ENCODE measurements at regions of chr4 and their contacts with region 1.

Region 1: GRCh38 chr4:15231265-15232091 is 196.4 kb upstream of the C1QTNF7 start:
- DNase-seq: peak; percentile 64
- ATAC-seq: peak; percentile 97
- H3K4me3 ChIP-seq: no peak overlapping the region
- H3K27ac ChIP-seq: no peak overlapping the region
- H3K4me1 ChIP-seq: peaks cover 0 to 5% of the 10 kb centered on the region in 2 experiments; a peak in 1 of 4 replicates
- H3K27me3 ChIP-seq: no peaks in the 10 kb centered on the region
- CTCF ChIP-seq: peak; percentile 76 to 83 (median 80)
- POLR2A ChIP-seq: no peak
- RAD21 ChIP-seq: peak; percentile 69

Region 2: DNA sequence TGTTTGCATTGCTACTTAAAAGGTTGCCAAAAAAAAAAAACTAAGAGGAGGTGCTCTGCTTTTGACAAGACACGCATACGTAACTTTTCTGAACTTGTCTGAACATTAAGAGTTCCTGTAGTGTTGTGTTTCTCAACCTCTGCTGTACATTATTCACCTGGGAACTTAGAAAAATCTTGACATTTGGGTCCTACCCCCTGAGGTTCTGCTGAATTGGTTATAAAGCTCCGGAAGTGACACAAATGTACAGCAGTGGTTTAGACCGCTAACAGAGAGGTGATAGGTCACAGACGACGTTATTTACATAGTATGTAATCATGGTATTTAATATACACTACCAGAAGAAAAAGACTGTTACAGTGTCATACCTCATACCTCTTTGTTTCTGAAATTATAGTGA is 168.1 kb before region 1 on chr4:
- CTCF ChIA-PET with region 1: no interaction called
- POLR2A ChIA-PET with region 1: no interaction called
- RAD21 ChIA-PET with region 1: no interaction called
- intact Hi-C with region 1: no loop called
- DNase-seq: no peak
- ATAC-seq: no peak
- H3K4me3 ChIP-seq: no peak overlapping the region
- H3K27ac ChIP-seq: no peak overlapping the region
- H3K4me1 ChIP-seq: no peaks in the 10 kb centered on the region
- H3K27me3 ChIP-seq: no peaks in the 10 kb centered on the region
- CTCF ChIP-seq: no peak
- POLR2A ChIP-seq: no peak
- RAD21 ChIP-seq: no peak

Region 3: GRCh38 chr4:15396157-15396800 is 164.8 kb after region 1 on chr4:
- CTCF ChIA-PET with region 1: interaction called, 4 read pairs
- POLR2A ChIA-PET with region 1: no interaction called
- RAD21 ChIA-PET with region 1: no interaction called
- intact Hi-C with region 1: loop called (anchors 2 kb)
- DNase-seq: peak; percentile 34
- ATAC-seq: peak; percentile 95
- H3K4me3 ChIP-seq: no peak overlapping the region
- H3K27ac ChIP-seq: no peak overlapping the region
- H3K4me1 ChIP-seq: peaks cover 0 to 9% of the 10 kb centered on the region in 2 experiments; a peak in 3 of 4 replicates
- H3K27me3 ChIP-seq: no peaks in the 10 kb centered on the region
- CTCF ChIP-seq: peak; percentile 47 to 84 (median 76); a peak in 5 of 6 replicates
- POLR2A ChIP-seq: no peak
- RAD21 ChIP-seq: peak; percentile 67

Region 4: GRCh38 chr4:15457406-15458201 is 226.1 kb after region 1 on chr4:
- CTCF ChIA-PET with region 1: interaction called, 4 read pairs
- POLR2A ChIA-PET with region 1: no interaction called
- RAD21 ChIA-PET with region 1: interaction called in 1 of 2 experiments, 3 read pairs
- intact Hi-C with region 1: loop called (anchors 1 kb)
- DNase-seq: no peak
- ATAC-seq: peak; percentile 88
- H3K4me3 ChIP-seq: no peak overlapping the region
- H3K27ac ChIP-seq: no peak overlapping the region
- H3K4me1 ChIP-seq: peaks cover 0 to under 1% of the 10 kb centered on the region in 2 experiments; a peak in 1 of 4 replicates
- H3K27me3 ChIP-seq: peaks cover 17% of the 10 kb centered on the region; the same call in 1 of the 2 replicates
- CTCF ChIP-seq: peak; percentile 45 to 78 (median 67); a peak in 5 of 6 replicates
- POLR2A ChIP-seq: no peak
- RAD21 ChIP-seq: peak; percentile 68

Region 5: GRCh38 chr4:15649914-15650545 is 418.6 kb after region 1 on chr4:
- CTCF ChIA-PET with region 1: no interaction called
- POLR2A ChIA-PET with region 1: no interaction called
- RAD21 ChIA-PET with region 1: no interaction called
- intact Hi-C with region 1: loop called (anchors 2 kb)
- DNase-seq: peak; percentile 45
- ATAC-seq: peak; percentile 66
- H3K4me3 ChIP-seq: no peak overlapping the region
- H3K27ac ChIP-seq: no peak overlapping the region
- H3K4me1 ChIP-seq: peaks cover 8 to 18% of the 10 kb centered on the region in 2 experiments
- H3K27me3 ChIP-seq: no peaks in the 10 kb centered on the region
- CTCF ChIP-seq: peak; percentile 63 to 89 (median 77); a peak in 5 of 6 replicates
- POLR2A ChIP-seq: no peak
- RAD21 ChIP-seq: peak; percentile 80

Region 6: GRCh38 chr4:16006791-16007446 is 775.4 kb after region 1 on chr4:
- CTCF ChIA-PET with region 1: no interaction called
- POLR2A ChIA-PET with region 1: no interaction called
- RAD21 ChIA-PET with region 1: no interaction called
- intact Hi-C with region 1: no loop called
- DNase-seq: no peak
- ATAC-seq: no peak
- H3K4me3 ChIP-seq: no peak overlapping the region
- H3K27ac ChIP-seq: no peak overlapping the region
- H3K4me1 ChIP-seq: no peaks in the 10 kb centered on the region
- H3K27me3 ChIP-seq: no peaks in the 10 kb centered on the region
- CTCF ChIP-seq: no peak
- POLR2A ChIP-seq: no peak
- RAD21 ChIP-seq: no peak